GM12878 (cell line): ENCODE measurements at regions of chr10 and their contacts with region 1.

Region 1: GRCh38 chr10:6401562-6402348 is 178.3 kb downstream of the PRKCQ start:
- DNase-seq: peak; percentile 37
- ATAC-seq: peak; percentile 92
- H3K4me3 ChIP-seq: no peak overlapping the region
- H3K27ac ChIP-seq: no peak overlapping the region
- H3K4me1 ChIP-seq: no peaks in the 10 kb centered on the region
- H3K27me3 ChIP-seq: peaks cover 0 to 5% of the 10 kb centered on the region in 2 experiments; a peak in 3 of 4 replicates
- CTCF ChIP-seq: peak; percentile 69 to 88 (median 77)
- EP300 ChIP-seq: no peak
- POLR2A ChIP-seq: no peak
- RAD21 ChIP-seq: peak; percentile 98

Region 2: GRCh38 chr10:6108603-6109443 is 292.9 kb before region 1 on chr10:
- CTCF ChIA-PET with region 1: interaction called, 120 read pairs
- POLR2A ChIA-PET with region 1: interaction called, 4 read pairs
- RAD21 ChIA-PET with region 1: interaction called, 27 read pairs
- SMC1A ChIA-PET with region 1: interaction called, 38 read pairs
- in situ Hi-C with region 1: loop called (anchors 5 kb)
- intact Hi-C with region 1: loop called (anchors 1 kb)
- DNase-seq: no peak
- ATAC-seq: peak; percentile 72
- H3K4me3 ChIP-seq: no peak overlapping the region
- H3K27ac ChIP-seq: no peak overlapping the region
- H3K4me1 ChIP-seq: no peaks in the 10 kb centered on the region
- H3K27me3 ChIP-seq: no peaks in the 10 kb centered on the region
- CTCF ChIP-seq: peak; percentile 50 to 77 (median 74); a peak in 5 of 6 replicates
- EP300 ChIP-seq: no peak
- POLR2A ChIP-seq: no peak
- RAD21 ChIP-seq: peak; percentile 79

Region 3: DNA sequence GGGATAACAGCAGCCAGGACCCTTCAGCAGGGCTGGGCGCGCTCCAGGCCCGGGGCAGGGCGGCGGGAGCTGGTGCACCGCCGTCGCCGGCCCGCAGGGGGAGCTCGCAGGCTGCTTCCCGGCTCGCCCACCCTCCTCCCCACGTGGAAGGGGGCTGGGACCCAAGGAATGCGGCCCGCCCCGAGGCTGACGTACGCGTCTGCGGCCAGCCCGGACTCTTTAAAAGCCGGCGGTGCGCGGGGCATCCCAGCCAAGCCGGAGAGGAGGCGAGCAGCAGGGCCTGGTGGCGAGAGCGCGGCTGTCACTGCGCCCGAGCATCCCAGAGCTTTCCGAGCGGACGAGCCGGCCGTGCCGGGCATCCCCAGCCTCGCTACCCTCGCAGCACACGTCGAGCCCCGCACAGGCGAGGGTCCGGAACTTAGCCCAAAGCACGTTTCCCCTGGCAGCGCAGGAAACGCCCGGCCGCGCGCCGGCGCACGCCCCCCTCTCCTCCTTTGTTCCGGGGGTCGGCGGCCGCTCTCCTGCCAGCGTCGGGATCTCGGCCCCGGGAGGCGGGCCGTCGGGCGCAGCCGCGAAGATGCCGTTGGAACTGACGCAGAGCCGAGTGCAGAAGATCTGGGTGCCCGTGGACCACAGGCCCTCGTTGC is 198.9 kb before region 1 on chr10 and contains the start of gene PFKFB3:
- CTCF ChIA-PET with region 1: interaction called, 217 read pairs
- POLR2A ChIA-PET with region 1: interaction called, 35 read pairs
- RAD21 ChIA-PET with region 1: interaction called, 173 read pairs
- SMC1A ChIA-PET with region 1: interaction called, 104 read pairs
- in situ Hi-C with region 1: loop called (anchors 5 kb)
- intact Hi-C with region 1: loop called (anchors 1 kb)
- DNase-seq: peak; percentile 59
- ATAC-seq: peak; percentile 80
- H3K4me3 ChIP-seq: peak within 1 kb of the TSS; percentile 95
- H3K27ac ChIP-seq: peak within 1 kb of the TSS; percentile 35; the same call in 1 of the 2 replicates
- H3K4me1 ChIP-seq: peaks cover 10% of the 10 kb centered on the region
- H3K27me3 ChIP-seq: no peaks in the 10 kb centered on the region
- CTCF ChIP-seq: peak; percentile 84 to 96 (median 90); a peak in 5 of 6 replicates
- EP300 ChIP-seq: peak in 1 of 2 experiments; percentile 8; a peak in 1 of 4 replicates
- POLR2A ChIP-seq: peak; percentile 100
- RAD21 ChIP-seq: peak; percentile 76
- polyA plus RNA-seq, gene PFKFB3: 1.6 to 2.6 TPM

Region 4: DNA sequence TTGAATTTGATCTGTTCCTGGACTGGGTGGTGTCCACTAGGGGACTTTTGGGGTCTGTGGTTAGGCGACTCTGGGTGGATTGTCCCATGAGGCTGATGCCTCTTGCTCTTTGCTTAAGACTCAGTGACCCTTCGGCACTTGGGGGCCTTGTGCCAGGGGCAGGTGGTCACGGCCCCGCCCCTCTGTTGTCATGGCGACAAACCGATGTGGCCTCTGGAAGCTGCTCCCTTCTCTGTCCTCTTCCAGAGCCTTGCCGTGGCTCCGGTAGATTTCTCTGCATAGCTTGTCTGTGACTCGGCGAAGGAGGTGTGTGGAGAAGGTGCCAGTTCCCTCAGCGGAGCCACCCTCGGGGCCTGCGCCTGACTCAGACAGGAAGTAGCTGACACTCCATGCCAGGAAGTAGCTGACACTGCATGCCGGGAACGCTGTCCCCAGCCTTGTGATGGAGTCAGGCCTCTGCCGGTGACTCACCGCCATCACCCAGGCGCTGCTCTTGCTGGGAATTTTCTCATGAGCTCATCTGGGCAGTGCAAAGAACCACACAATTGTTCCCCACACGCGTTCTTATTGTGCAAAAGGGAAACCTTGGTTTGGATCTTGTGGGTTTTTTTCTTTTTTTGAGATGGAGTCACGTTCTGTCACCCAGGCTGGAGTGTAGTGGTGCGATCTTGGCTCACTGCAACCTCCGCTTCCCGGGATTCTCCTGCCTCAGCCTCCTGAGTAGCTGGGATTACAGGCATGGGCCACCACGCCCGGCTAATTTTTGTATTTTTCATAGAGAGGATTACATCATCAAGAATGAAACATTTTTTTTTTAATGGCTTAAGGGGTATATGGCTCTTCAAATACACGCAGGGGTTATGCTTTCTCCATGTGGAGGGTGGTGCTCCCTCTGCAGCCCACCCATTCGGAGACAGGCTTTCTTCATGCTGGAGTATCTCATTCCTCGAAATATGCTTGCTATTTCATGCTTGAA is 126.4 kb before region 1 on chr10:
- CTCF ChIA-PET with region 1: interaction called, 11 read pairs
- POLR2A ChIA-PET with region 1: interaction called, 4 read pairs
- RAD21 ChIA-PET with region 1: interaction called, 15 read pairs
- SMC1A ChIA-PET with region 1: interaction called, 18 read pairs
- in situ Hi-C with region 1: no loop called
- intact Hi-C with region 1: no loop called
- DNase-seq: peak; percentile 49
- ATAC-seq: peak; percentile 77
- H3K4me3 ChIP-seq: peak overlapping the region; percentile 10; the same call in 1 of the 2 replicates
- H3K27ac ChIP-seq: peak overlapping the region; percentile 51
- H3K4me1 ChIP-seq: peaks cover 28% of the 10 kb centered on the region
- H3K27me3 ChIP-seq: peaks cover 0 to 1% of the 10 kb centered on the region in 2 experiments; a peak in 1 of 4 replicates
- CTCF ChIP-seq: 0 out of 6 replicates have a peak, but pooled peaks of 1 of the 3 experiments have one; percentile 2
- EP300 ChIP-seq: 0 out of 4 replicates have a peak, but pooled peaks have one; percentile 51 to 52
- POLR2A ChIP-seq: peak; percentile 77
- RAD21 ChIP-seq: peak; percentile 10; the same call in 1 of the 2 replicates

Region 5: GRCh38 chr10:6348096-6348874 is 53.5 kb before region 1 on chr10:
- CTCF ChIA-PET with region 1: interaction called, 25 read pairs
- POLR2A ChIA-PET with region 1: interaction called, 18 read pairs
- RAD21 ChIA-PET with region 1: interaction called, 79 read pairs
- SMC1A ChIA-PET with region 1: interaction called, 138 read pairs
- in situ Hi-C with region 1: no loop called
- intact Hi-C with region 1: no loop called
- DNase-seq: peak; percentile 93
- ATAC-seq: peak; percentile 95
- H3K4me3 ChIP-seq: peak overlapping the region; percentile 27; the same call in 1 of the 2 replicates
- H3K27ac ChIP-seq: peak overlapping the region; percentile 23
- H3K4me1 ChIP-seq: peaks cover 26% of the 10 kb centered on the region
- H3K27me3 ChIP-seq: no peaks in the 10 kb centered on the region
- CTCF ChIP-seq: no peak
- EP300 ChIP-seq: peak; percentile 96 to 97; a peak in 3 of 4 replicates
- POLR2A ChIP-seq: no peak
- RAD21 ChIP-seq: 0 out of 2 replicates have a peak, but pooled peaks have one; percentile 23

Region 6: GRCh38 chr10:6667679-6668270 is 266.0 kb after region 1 on chr10:
- CTCF ChIA-PET with region 1: interaction called, 90 read pairs
- POLR2A ChIA-PET with region 1: no interaction called
- RAD21 ChIA-PET with region 1: interaction called, 3 read pairs
- SMC1A ChIA-PET with region 1: interaction called, 4 read pairs
- in situ Hi-C with region 1: no loop called
- intact Hi-C with region 1: no loop called
- DNase-seq: no peak
- ATAC-seq: peak; percentile 36; the same call in 1 of the 3 replicates
- H3K4me3 ChIP-seq: no peak overlapping the region
- H3K27ac ChIP-seq: no peak overlapping the region
- H3K4me1 ChIP-seq: no peaks in the 10 kb centered on the region
- H3K27me3 ChIP-seq: peaks cover 0 to 1% of the 10 kb centered on the region in 2 experiments; a peak in 2 of 4 replicates
- CTCF ChIP-seq: peak; percentile 30 to 52 (median 34); a peak in 5 of 6 replicates
- EP300 ChIP-seq: no peak
- POLR2A ChIP-seq: no peak
- RAD21 ChIP-seq: peak; percentile 33; the same call in 1 of the 2 replicates